ENCODE measurements at regions of chr19 and their contacts with region 1.

Region 1: DNA sequence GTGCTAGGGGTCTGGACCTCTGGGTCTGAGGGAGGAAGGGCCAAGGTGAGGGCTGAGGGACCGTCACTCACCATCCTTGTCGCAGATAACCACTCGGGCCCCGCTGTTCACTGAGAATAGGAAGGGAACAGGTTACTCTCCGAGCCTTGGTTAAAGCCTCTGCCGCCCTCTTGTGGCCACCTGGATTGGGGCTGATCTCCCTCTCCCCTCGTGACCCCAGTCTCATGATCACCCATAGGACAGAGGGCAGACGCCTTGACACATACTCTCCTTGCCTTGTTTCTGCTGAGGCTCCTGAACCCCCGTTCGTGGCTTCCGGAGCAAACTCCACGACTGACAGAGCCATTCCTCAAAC is 580 bp downstream of the HSD17B14 start:
- DNase-seq: peak; percentile 76
- ATAC-seq: peak; percentile 93
- H3K4me3 ChIP-seq: peak overlapping the region; percentile 29 to 35; a peak in 3 of 4 replicates
- H3K27ac ChIP-seq: peak overlapping the region; percentile 56
- H3K4me1 ChIP-seq: peaks cover 5 to 23% of the 10 kb centered on the region in 2 experiments; a peak in 3 of 4 replicates
- H3K27me3 ChIP-seq: no peaks in the 10 kb centered on the region
- CTCF ChIP-seq: peak; percentile 86 to 92 (median 91)
- POLR2A ChIP-seq: no peak
- RAD21 ChIP-seq: peak; percentile 97

Region 2: GRCh38 chr19:48634424-48635197 is 201.1 kb before region 1 on chr19:
- CTCF ChIA-PET with region 1: no interaction called
- POLR2A ChIA-PET with region 1: no interaction called
- RAD21 ChIA-PET with region 1: no interaction called
- intact Hi-C with region 1: no loop called
- DNase-seq: peak; percentile 94
- ATAC-seq: peak; percentile 29
- H3K4me3 ChIP-seq: peak overlapping the region; percentile 47 to 83
- H3K27ac ChIP-seq: peak overlapping the region; percentile 95
- H3K4me1 ChIP-seq: peaks cover 41 to 86% of the 10 kb centered on the region in 2 experiments
- H3K27me3 ChIP-seq: no peaks in the 10 kb centered on the region
- CTCF ChIP-seq: no peak
- POLR2A ChIP-seq: peak; percentile 69
- RAD21 ChIP-seq: no peak

Region 3: GRCh38 chr19:48646001-48646721 is 189.6 kb before region 1 on chr19 and contains the start of gene CA11:
- CTCF ChIA-PET with region 1: no interaction called
- POLR2A ChIA-PET with region 1: no interaction called
- RAD21 ChIA-PET with region 1: no interaction called
- intact Hi-C with region 1: loop called (anchors 2 kb)
- DNase-seq: peak; percentile 77
- ATAC-seq: peak; percentile 83
- H3K4me3 ChIP-seq: peak within 1 kb of the TSS; percentile 55 to 58
- H3K27ac ChIP-seq: peak within 1 kb of the TSS; percentile 83
- H3K4me1 ChIP-seq: peaks cover 19 to 52% of the 10 kb centered on the region in 2 experiments
- H3K27me3 ChIP-seq: no peaks in the 10 kb centered on the region
- CTCF ChIP-seq: peak in 2 of 3 experiments; percentile 83 to 91; a peak in 5 of 6 replicates
- POLR2A ChIP-seq: no peak
- RAD21 ChIP-seq: peak; percentile 95
- total RNA-seq, gene CA11: 29.6 TPM

Region 4: DNA sequence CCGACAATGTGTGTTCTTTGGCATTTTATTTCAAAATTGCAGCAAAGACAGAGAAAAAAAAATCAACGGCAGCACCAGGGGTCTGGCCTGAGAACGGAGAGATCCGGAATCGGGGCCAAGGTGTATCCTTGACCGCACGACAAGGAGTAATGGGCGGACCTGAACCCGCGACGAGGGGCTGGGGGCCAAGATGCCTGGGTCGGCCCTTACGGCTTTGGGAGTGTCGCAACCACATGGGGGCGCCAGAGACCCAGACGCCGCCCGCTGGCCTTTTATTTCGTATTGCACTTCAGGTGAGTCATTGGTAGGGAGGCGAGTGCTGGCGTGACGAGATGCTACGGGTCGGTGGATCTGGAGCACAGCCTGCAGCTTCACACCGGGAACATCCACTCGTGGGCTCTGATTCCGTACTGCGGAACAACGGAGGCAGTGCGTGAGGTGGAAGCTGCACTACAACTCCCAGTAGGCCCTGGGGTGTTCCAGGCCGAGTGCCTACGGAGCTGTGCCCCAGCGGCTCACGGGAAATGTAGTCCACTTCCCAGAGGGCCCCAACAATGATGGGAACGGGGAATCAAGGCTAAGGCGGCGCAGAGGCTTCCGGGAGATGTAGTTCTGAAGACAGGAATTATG is 40.5 kb before region 1 on chr19:
- CTCF ChIA-PET with region 1: interaction called, 49 read pairs
- POLR2A ChIA-PET with region 1: interaction called, 6 read pairs
- RAD21 ChIA-PET with region 1: interaction called, 3 to 6 read pairs
- intact Hi-C with region 1: loop called (anchors 1 kb)
- DNase-seq: peak; percentile 81
- ATAC-seq: peak; percentile 99
- H3K4me3 ChIP-seq: peak overlapping the region; percentile 10 to 27; a peak in 3 of 4 replicates
- H3K27ac ChIP-seq: peak overlapping the region; percentile 41
- H3K4me1 ChIP-seq: peaks cover 0 to 11% of the 10 kb centered on the region in 2 experiments; a peak in 1 of 4 replicates
- H3K27me3 ChIP-seq: no peaks in the 10 kb centered on the region
- CTCF ChIP-seq: peak; percentile 93 to 96 (median 93)
- POLR2A ChIP-seq: no peak
- RAD21 ChIP-seq: peak; percentile 99

Region 5: DNA sequence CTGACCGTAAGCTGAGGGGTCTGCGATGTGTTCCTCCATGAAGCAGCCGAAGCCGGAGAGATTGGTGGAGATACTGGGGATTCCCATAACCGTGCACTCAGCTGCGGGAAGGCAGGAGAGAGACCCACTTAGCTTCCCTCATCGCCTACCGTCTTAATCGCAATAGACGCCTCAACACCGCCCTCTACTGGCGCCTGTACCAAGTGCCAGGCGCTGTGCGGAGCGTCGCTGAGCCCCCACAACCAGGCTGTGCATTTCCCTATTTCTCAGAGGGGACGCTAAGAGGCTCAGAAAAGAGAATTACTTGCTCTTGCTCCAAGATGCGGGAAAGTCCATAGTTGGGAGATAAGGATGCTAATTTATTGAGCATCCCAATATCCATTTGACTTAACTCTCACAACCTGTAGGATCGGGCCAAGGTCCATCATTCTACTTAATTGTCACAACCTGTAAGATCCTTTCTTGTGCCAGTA is 135.2 kb after region 1 on chr19:
- CTCF ChIA-PET with region 1: interaction called, 7 read pairs
- POLR2A ChIA-PET with region 1: interaction called, 5 read pairs
- RAD21 ChIA-PET with region 1: no interaction called
- intact Hi-C with region 1: loop called (anchors 1 kb)
- DNase-seq: no peak
- ATAC-seq: peak; percentile 71
- H3K4me3 ChIP-seq: no peak overlapping the region
- H3K27ac ChIP-seq: no peak overlapping the region
- H3K4me1 ChIP-seq: peaks cover 0 to 22% of the 10 kb centered on the region in 2 experiments; a peak in 3 of 4 replicates
- H3K27me3 ChIP-seq: no peaks in the 10 kb centered on the region
- CTCF ChIP-seq: peak in 2 of 3 experiments; percentile 94 to 95; a peak in 4 of 6 replicates
- POLR2A ChIP-seq: no peak
- RAD21 ChIP-seq: peak; percentile 88

Measured in HCT116 (cell line).